ENCODE measurements at regions of chr11 and their contacts with region 1.

Region 1: DNA sequence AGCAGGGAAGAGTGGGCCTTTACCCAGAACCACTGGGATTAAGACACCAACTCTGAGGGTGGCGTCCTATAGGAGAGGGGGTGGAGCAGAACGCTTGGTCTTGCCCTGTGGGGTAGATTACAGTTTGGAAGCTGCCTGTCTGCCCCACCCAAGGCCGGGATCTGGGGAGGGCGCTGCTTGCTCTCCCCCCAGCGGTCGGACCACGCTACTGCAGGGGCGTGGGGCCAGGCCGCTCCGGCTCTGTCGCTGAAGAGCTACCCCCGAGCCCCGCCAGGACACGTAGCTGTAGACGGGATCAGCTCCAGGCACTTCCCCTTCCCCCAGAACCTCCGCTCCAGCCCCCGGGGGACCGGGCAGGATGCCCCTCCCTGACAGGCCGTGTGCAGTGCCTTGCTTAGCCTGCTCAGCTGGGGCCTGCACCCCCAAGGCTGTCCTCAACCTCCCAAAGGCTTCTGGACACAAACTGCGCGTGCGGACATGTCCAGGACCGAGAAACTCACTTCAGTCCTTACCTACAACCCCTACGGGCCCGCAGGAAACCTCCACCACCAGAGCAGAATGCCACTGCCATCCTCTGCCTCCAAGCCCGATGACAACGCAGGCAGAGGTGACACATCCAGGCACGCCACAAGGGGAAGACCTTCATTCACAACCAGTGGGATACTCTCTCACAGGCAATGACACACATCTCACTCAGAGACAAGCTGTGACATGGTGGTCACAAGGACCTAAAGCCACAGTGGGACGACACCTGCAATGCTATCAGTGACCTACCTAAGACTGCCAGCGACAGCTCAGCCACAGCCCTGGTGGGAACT is 3.6 kb downstream of the AHNAK start:
- DNase-seq: peak; percentile 82
- H3K4me3 Mint-ChIP-seq: peak overlapping the region; percentile 99
- H3K27ac Mint-ChIP-seq: peak overlapping the region; percentile 69
- H3K4me1 Mint-ChIP-seq: peaks cover 44% of the 10 kb centered on the region
- H3K27me3 Mint-ChIP-seq: no peaks in the 10 kb centered on the region
- CTCF ChIP-seq: peak; percentile 99

Region 2: DNA sequence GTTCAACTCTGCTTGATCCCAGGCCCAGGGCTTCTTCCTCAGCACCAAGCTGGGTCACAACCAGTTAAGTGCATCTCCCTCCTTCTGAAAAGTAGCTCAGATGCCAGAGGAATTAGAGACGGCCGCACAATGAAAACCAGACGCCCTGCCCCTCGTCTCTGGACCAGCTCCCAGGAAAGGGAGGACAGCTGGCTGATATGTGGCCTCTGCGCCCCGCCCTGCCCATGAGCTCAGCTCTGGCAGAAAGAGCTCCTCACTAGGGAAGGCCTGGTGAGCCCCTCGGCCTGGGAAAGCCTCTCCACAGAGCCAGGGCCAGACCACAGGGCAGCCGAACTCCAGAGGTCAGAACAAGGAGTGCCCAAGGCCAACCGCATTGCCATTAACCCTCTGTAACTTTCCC is 142.2 kb before region 1 on chr11:
- CTCF ChIA-PET with region 1: interaction called, 145 read pairs
- POLR2A ChIA-PET with region 1: interaction called, 41 read pairs
- intact Hi-C with region 1: loop called (anchors 1 kb)
- DNase-seq: no peak
- H3K4me3 Mint-ChIP-seq: no peak overlapping the region
- H3K27ac Mint-ChIP-seq: no peak overlapping the region
- H3K4me1 Mint-ChIP-seq: no peaks in the 10 kb centered on the region
- H3K27me3 Mint-ChIP-seq: no peaks in the 10 kb centered on the region
- CTCF ChIP-seq: no peak

Region 3: GRCh38 chr11:62427630-62428233 is 115.2 kb before region 1 on chr11:
- CTCF ChIA-PET with region 1: interaction called, 86 read pairs
- POLR2A ChIA-PET with region 1: interaction called, 15 read pairs
- intact Hi-C with region 1: loop called (anchors 1 kb)
- DNase-seq: no peak
- H3K4me3 Mint-ChIP-seq: no peak overlapping the region
- H3K27ac Mint-ChIP-seq: no peak overlapping the region
- H3K4me1 Mint-ChIP-seq: peaks cover 7% of the 10 kb centered on the region
- H3K27me3 Mint-ChIP-seq: no peaks in the 10 kb centered on the region
- CTCF ChIP-seq: no peak

Region 4: GRCh38 chr11:62508268-62509058 is 34.5 kb before region 1 on chr11:
- CTCF ChIA-PET with region 1: interaction called, 13 read pairs
- POLR2A ChIA-PET with region 1: interaction called, 23 read pairs
- intact Hi-C with region 1: no loop called
- DNase-seq: peak; percentile 60
- H3K4me3 Mint-ChIP-seq: peak overlapping the region; percentile 51
- H3K27ac Mint-ChIP-seq: peak overlapping the region; percentile 88
- H3K4me1 Mint-ChIP-seq: peaks cover 8% of the 10 kb centered on the region
- H3K27me3 Mint-ChIP-seq: no peaks in the 10 kb centered on the region
- CTCF ChIP-seq: peak; percentile 29

Region 5: DNA sequence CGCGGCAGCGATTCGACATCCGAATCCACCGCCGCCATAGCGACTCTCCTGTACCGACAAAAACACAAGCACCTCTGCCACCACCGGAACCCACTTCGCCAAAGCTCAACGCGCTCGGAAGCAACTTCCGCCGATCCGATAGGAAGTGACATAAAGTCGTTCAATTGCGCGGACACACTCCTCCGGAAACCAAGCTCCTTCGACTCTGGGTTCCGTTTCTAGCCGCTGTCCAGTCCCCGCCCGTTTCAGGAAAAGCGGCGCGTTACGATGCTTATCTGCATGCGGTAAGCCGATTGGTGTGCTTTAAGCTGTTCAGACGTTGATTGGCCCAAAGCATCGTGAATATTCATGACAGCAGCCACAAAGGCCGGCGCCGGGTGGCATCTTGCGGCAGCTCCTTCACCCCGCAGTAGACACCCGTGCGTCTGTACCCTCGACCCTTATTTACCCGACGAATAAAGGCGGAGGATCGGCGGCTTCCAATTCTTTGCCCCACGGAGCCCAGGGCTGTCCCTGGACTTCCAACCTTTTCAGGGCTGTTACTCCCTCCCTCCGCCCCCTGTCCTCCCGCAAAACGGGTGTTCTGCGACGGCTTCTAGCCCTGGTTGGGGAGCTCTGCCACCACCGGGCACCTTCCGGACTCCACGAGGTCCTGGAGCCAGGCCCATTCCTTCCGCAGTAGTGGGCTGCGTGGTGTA is 48.6 kb after region 1 on chr11 and contains the start of gene TUT1:
- CTCF ChIA-PET with region 1: interaction called, 16 read pairs
- POLR2A ChIA-PET with region 1: interaction called, 81 read pairs
- intact Hi-C with region 1: no loop called
- DNase-seq: peak; percentile 99
- H3K4me3 Mint-ChIP-seq: peak within 1 kb of the TSS; percentile 96
- H3K27ac Mint-ChIP-seq: peak within 1 kb of the TSS; percentile 95
- H3K4me1 Mint-ChIP-seq: peaks cover 12% of the 10 kb centered on the region
- H3K27me3 Mint-ChIP-seq: no peaks in the 10 kb centered on the region
- CTCF ChIP-seq: no peak
- total RNA-seq, gene TUT1: 26.0 and 28.3 TPM in 2 replicates

Region 6: GRCh38 chr11:62621567-62622470 is 78.9 kb after region 1 on chr11 and contains the start of gene B3GAT3:
- CTCF ChIA-PET with region 1: no interaction called
- POLR2A ChIA-PET with region 1: interaction called, 15 read pairs
- intact Hi-C with region 1: no loop called
- DNase-seq: peak; percentile 98
- H3K4me3 Mint-ChIP-seq: peak within 1 kb of the TSS; percentile 97
- H3K27ac Mint-ChIP-seq: peak within 1 kb of the TSS; percentile 92
- H3K4me1 Mint-ChIP-seq: peaks cover 12% of the 10 kb centered on the region
- H3K27me3 Mint-ChIP-seq: no peaks in the 10 kb centered on the region
- CTCF ChIP-seq: no peak
- total RNA-seq, gene B3GAT3: 40.1 and 42.4 TPM in 2 replicates

Region 7: DNA sequence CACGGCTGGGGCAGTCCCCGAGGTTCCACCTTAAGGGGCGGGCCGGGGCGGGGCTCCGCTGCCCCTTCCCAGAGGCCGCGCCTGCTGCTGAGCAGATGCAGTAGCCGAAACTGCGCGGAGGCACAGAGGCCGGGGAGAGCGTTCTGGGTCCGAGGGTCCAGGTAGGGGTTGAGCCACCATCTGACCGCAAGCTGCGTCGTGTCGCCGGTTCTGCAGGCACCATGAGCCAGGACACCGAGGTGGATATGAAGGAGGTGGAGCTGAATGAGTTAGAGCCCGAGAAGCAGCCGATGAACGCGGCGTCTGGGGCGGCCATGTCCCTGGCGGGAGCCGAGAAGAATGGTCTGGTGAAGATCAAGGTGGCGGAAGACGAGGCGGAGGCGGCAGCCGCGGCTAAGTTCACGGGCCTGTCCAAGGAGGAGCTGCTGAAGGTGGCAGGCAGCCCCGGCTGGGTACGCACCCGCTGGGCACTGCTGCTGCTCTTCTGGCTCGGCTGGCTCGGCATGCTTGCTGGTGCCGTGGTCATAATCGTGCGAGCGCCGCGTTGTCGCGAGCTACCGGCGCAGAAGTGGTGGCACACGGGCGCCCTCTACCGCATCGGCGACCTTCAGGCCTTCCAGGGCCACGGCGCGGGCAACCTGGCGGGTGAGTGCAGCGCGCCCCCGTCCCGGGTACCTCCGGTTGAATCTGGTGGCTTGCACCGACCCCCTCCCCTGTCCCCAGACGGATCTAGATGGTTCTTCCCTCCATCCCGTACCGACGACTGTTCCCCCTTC is 338.0 kb after region 1 on chr11 and contains the start of gene SLC3A2:
- CTCF ChIA-PET with region 1: interaction called, 3 read pairs
- POLR2A ChIA-PET with region 1: interaction called, 18 read pairs
- intact Hi-C with region 1: no loop called
- DNase-seq: peak; percentile 91
- H3K4me3 Mint-ChIP-seq: peak within 1 kb of the TSS; percentile 100
- H3K27ac Mint-ChIP-seq: peak within 1 kb of the TSS; percentile 99
- H3K4me1 Mint-ChIP-seq: peaks cover 47% of the 10 kb centered on the region
- H3K27me3 Mint-ChIP-seq: no peaks in the 10 kb centered on the region
- CTCF ChIP-seq: peak; percentile 70
- total RNA-seq, gene SLC3A2: 838 and 896 TPM in 2 replicates

Region 8: GRCh38 chr11:63017306-63017974 is 474.5 kb after region 1 on chr11:
- CTCF ChIA-PET with region 1: no interaction called
- POLR2A ChIA-PET with region 1: no interaction called
- intact Hi-C with region 1: no loop called
- DNase-seq: no peak
- H3K4me3 Mint-ChIP-seq: no peak overlapping the region
- H3K27ac Mint-ChIP-seq: no peak overlapping the region
- H3K4me1 Mint-ChIP-seq: no peaks in the 10 kb centered on the region
- H3K27me3 Mint-ChIP-seq: peaks cover 54% of the 10 kb centered on the region
- CTCF ChIP-seq: no peak

Region 9: GRCh38 chr11:63802637-63803414 is 1259.9 kb after region 1 on chr11:
- CTCF ChIA-PET with region 1: no interaction called
- POLR2A ChIA-PET with region 1: no interaction called
- intact Hi-C with region 1: no loop called
- DNase-seq: peak; percentile 90
- H3K4me3 Mint-ChIP-seq: peak overlapping the region; percentile 67
- H3K27ac Mint-ChIP-seq: peak overlapping the region; percentile 85
- H3K4me1 Mint-ChIP-seq: peaks cover 9% of the 10 kb centered on the region
- H3K27me3 Mint-ChIP-seq: no peaks in the 10 kb centered on the region
- CTCF ChIP-seq: no peak

Measured in MCF 10A (cell line).